Posterior cingulate gyrus (tissue), 11 donors: ENCODE measurements at regions of chrX and their contacts with region 1.

Region 1: GRCh38 chrX:103254921-103255493 is at the start of gene TCEAL8:
- DNase-seq: peak; percentile 69 to 97 (median 84)

Region 2: GRCh38 chrX:103214870-103215424 is 40.1 kb before region 1 on chrX and contains the start of gene BEX4:
- intact Hi-C with region 1: loop called (anchors 5 kb)
- DNase-seq: peak; percentile 81 to 98 (median 87)